Left ventricle myocardium inferior (tissue), 1 donor: ENCODE measurements at regions of chr11 and their contacts with region 1.

Region 1: GRCh38 chr11:8070417-8071115 is 10.4 kb upstream of the TUB start:
- DNase-seq: no peak
- H3K4me3 ChIP-seq: no peak overlapping the region
- H3K27ac ChIP-seq: no peak overlapping the region
- H3K4me1 ChIP-seq: peaks cover 51% of the 10 kb centered on the region
- H3K27me3 ChIP-seq: no peaks in the 10 kb centered on the region
- CTCF ChIP-seq: peak; percentile 62

Region 2: GRCh38 chr11:8019314-8020243 is 51.0 kb before region 1 on chr11:
- intact Hi-C with region 1: loop called (anchors 10 kb)
- DNase-seq: no peak
- H3K4me3 ChIP-seq: peak overlapping the region; percentile 75
- H3K27ac ChIP-seq: peak overlapping the region; percentile 88
- H3K4me1 ChIP-seq: peaks cover 30% of the 10 kb centered on the region
- H3K27me3 ChIP-seq: peaks cover 19% of the 10 kb centered on the region
- CTCF ChIP-seq: no peak